Uterus (tissue), 4 donors: ENCODE measurements at regions of chr3 and their contacts with region 1.

Region 1: DNA sequence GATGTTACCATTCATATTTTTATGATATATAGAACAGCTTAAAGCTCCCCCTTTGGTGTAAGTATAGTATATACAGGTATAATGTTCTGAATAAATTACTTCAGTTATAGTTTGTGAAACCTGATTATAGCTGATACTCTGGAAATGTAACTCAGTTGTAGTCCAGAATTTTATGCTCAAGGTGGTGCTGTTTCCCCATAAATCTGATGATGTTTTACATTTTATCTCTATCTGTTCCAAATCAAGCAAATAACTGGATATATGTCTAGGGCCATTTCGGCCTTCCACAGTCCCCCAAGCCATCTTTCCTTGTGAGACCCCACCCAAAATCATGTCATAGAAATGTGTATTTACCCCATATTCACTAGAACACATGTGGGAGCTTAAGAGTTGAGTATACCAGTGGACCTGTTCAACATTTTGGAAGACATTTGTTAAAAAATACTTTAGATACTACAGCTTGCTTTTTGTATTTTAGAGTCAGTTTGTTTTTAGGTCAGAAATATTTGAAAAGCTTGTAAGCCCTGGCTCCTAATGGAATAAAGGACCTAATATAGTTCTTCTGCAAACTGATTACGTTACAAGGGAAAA is 107.1 kb downstream of the ATG7 start:
- DNase-seq: no peak
- H3K4me3 ChIP-seq: no peak overlapping the region
- H3K27ac ChIP-seq: peak overlapping the region in 1 of 2 donors; percentile 43
- H3K4me1 ChIP-seq: no peaks in the 10 kb centered on the region
- H3K27me3 ChIP-seq: no peaks in the 10 kb centered on the region
- CTCF ChIP-seq: peak; percentile 63 to 80 (median 70)
- POLR2A ChIP-seq: no peak

Region 2: DNA sequence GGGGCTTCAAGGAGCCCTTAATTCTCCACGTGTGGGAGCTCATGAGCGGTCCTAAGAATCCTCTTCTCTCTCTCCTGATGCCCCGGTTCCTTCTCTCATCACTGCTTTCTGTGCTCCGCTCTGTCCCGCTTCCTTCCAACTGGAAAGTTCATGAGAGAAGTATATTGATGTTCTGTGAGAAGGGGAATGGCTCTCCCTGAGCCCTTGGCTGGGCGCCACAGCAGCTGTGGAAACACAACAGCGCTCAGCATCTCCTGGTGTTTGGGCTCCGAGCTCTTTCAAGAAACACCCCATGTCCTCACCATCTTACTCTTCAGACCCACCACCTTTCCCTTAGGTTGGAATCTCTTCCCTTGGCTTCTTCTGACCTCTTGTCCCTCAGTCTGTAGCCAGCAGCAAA is 102.7 kb after region 1 on chr3:
- intact Hi-C with region 1: no loop called
- DNase-seq: peak; percentile 70 to 77
- H3K4me3 ChIP-seq: no peak overlapping the region
- H3K27ac ChIP-seq: peak overlapping the region; percentile 76 to 96
- H3K4me1 ChIP-seq: peaks cover 10 to 18% of the 10 kb centered on the region in 2 donors
- H3K27me3 ChIP-seq: no peaks in the 10 kb centered on the region
- CTCF ChIP-seq: no peak
- POLR2A ChIP-seq: no peak

Region 3: DNA sequence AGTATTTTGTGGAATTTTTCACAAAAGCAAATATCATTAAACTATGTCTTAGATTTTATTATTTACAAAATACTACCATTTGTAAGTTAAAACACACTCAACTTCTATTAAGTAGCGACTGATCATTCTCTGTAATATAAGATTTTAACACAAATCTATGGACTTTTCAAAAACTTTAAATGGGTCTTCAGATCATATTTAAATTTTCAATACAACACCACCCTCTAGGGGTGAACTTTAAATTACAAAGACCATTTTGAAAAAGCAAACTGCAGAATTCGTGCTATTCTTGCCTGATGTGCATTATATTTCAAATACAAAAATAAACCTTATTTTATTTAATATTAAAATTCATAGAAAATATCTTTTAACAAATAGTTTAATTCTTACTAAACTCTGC is 272.6 kb after region 1 on chr3:
- intact Hi-C with region 1: loop called (anchors 5 kb)
- DNase-seq: no peak
- H3K4me3 ChIP-seq: no peak overlapping the region
- H3K27ac ChIP-seq: no peak overlapping the region
- H3K4me1 ChIP-seq: no peaks in the 10 kb centered on the region
- H3K27me3 ChIP-seq: no peaks in the 10 kb centered on the region
- CTCF ChIP-seq: peak; percentile 44 to 63 (median 54)
- POLR2A ChIP-seq: no peak

Region 4: DNA sequence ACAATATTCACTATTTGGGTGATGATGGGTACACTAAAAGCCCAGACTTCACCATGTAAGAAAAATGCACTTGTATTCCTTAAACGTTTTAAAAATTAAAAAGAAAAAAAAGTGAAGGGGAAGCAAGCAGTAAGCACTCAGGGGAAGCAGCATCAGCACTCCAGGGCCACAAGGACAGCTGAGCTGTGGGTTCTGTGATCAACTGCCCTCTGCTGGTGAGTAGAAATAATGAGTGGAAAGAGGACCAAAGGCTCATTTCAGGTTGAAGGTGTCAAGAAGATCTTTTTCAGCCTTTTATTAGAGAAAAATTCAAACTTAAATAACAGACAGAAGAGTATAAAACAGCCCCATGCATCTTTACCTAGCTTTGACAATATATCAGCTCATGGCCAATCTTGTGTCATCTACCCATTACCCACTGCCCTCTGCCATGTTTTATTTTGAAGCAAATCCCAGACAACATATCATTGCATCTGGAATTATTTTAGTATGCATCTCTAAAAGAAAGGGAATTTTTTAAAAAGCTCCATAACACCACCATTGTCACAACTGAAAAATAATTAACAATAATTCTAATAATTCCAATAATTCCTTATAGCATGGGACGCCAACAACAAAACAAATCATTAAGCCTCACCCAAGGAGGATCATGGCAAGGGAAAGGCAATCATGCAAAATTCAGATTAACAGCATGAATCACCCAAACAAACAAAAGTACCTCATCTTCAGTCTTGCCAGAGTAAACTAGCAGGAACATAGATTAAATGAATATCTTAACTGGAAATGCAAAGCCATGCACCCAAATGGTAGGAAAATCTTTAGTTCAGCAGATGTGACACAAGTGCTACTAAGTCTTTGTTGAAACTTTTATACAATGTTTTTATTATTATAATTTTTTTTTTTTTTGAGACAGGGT is 424.9 kb after region 1 on chr3:
- intact Hi-C with region 1: loop called (anchors 10 kb)
- DNase-seq: peak in 1 of 2 donors; percentile 46
- H3K4me3 ChIP-seq: no peak overlapping the region
- H3K27ac ChIP-seq: no peak overlapping the region
- H3K4me1 ChIP-seq: no peaks in the 10 kb centered on the region
- H3K27me3 ChIP-seq: no peaks in the 10 kb centered on the region
- CTCF ChIP-seq: peak; percentile 62 to 74 (median 70)
- POLR2A ChIP-seq: no peak